ENCODE measurements at regions of chr7 and their contacts with region 1.

Region 1: GRCh38 chr7:47968847-47969774 is 10.3 kb downstream of the HUS1 start:
- DNase-seq: peak; percentile 48
- ATAC-seq: peak; percentile 77
- H3K4me3 Mint-ChIP-seq: no peak overlapping the region
- H3K27ac Mint-ChIP-seq: no peak overlapping the region
- H3K4me1 Mint-ChIP-seq: peaks cover 23% of the 10 kb centered on the region
- H3K27me3 Mint-ChIP-seq: no peaks in the 10 kb centered on the region
- CTCF ChIP-seq: peak; percentile 86

Region 2: GRCh38 chr7:47266131-47266706 is 702.9 kb before region 1 on chr7:
- CTCF ChIA-PET with region 1: interaction called, 28 read pairs
- POLR2A ChIA-PET with region 1: no interaction called
- intact Hi-C with region 1: loop called (anchors 1 kb)
- DNase-seq: peak; percentile 50
- ATAC-seq: peak; percentile 92
- H3K4me3 Mint-ChIP-seq: no peak overlapping the region
- H3K27ac Mint-ChIP-seq: no peak overlapping the region
- H3K4me1 Mint-ChIP-seq: no peaks in the 10 kb centered on the region
- H3K27me3 Mint-ChIP-seq: no peaks in the 10 kb centered on the region
- CTCF ChIP-seq: peak; percentile 60

Region 3: DNA sequence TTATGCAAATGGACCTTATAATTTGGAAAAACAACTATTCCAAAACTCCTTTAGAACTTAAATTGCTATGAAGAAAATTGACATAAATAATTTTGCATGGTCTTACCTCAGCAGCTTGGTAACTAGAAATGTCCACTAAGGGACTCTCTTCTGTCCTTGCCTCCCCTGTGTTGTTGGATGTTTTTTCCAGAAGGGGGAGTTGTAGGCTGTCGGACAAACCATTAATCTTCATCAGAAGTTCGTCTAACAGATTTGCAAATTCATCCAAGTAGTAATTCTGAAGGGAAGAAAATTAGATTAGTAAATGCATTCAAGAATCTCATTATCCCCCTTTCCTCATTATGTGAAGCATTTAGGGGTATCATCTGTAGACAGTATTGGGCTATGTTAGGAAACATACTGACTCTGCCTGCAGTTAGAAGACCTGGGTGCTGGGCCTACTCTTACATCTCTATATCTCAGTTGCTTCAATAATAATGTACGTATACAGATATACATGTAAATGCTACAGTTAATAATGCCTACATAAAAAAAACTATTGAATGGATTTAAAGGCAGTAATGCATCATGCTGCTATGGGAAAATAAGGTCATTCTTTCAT is 176.5 kb before region 1 on chr7:
- CTCF ChIA-PET with region 1: no interaction called
- POLR2A ChIA-PET with region 1: no interaction called
- intact Hi-C with region 1: loop called (anchors 1 kb)
- DNase-seq: no peak
- ATAC-seq: no peak
- H3K4me3 Mint-ChIP-seq: no peak overlapping the region
- H3K27ac Mint-ChIP-seq: no peak overlapping the region
- H3K4me1 Mint-ChIP-seq: no peaks in the 10 kb centered on the region
- H3K27me3 Mint-ChIP-seq: no peaks in the 10 kb centered on the region
- CTCF ChIP-seq: no peak

Region 4: DNA sequence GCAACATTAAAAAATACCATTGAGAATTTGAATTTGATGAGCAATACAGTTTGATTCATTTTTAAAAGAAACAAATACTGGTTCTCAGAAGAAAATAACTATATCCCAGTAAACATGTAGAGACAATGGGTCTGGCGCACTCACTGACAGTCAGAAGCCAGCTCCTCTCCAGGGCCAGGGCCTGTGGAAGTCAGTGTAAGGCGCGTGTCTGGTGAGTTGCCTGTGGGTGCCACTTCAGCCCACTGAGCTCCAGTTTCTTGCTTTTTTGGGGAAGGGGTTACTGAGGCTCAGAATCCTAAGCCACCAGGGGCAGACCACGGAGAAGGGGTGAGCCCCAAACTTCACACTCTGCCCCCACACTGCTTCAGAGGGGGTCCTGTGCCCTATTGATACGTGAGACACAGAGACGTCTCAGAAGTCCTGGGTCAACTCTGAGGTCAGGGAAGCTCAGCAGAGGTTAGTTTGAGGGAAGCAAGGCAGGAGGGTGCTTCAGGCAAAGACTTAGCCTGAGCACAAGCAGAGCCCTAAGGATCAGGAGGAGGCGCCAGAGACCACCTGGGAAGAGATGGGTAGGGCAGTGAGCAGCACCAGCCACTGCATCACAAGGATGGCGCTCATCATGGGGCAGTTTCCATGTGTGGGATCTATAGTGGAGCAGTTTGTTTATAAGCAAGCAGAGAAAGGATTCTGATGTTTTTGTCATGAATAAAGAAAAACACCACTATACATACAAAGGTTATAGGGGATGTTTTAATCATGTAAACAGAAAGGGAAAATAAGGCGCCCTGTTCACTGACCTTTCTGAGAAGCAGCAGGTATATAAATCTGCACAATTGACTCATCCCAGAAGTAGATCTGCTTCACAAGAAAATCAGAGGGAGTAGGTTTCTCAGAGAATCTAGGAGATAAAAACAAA is 116.5 kb before region 1 on chr7:
- CTCF ChIA-PET with region 1: interaction called, 5 read pairs
- POLR2A ChIA-PET with region 1: no interaction called
- intact Hi-C with region 1: loop called (anchors 1 kb)
- DNase-seq: no peak
- ATAC-seq: peak; percentile 40
- H3K4me3 Mint-ChIP-seq: no peak overlapping the region
- H3K27ac Mint-ChIP-seq: no peak overlapping the region
- H3K4me1 Mint-ChIP-seq: no peaks in the 10 kb centered on the region
- H3K27me3 Mint-ChIP-seq: no peaks in the 10 kb centered on the region
- CTCF ChIP-seq: no peak

Region 5: DNA sequence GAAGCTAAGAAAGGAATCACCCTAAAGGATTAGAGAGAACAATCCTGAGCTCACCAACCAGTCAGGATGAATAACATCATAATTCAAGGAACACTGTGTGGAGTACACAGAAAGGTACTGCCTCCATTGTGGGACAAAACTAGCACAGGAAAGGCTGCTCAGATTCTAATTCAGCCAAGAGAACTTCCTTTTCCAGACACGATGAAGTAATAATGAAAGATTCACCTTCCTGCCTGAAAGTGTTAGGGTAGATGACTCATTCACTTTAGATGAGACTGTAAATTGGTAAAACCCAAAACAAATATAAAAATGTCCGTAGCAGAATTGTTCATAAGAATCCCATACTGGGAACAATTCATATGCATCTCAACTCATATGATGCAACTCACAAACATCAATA is 1122.4 kb after region 1 on chr7:
- CTCF ChIA-PET with region 1: no interaction called
- POLR2A ChIA-PET with region 1: no interaction called
- intact Hi-C with region 1: no loop called
- DNase-seq: no peak
- ATAC-seq: no peak
- H3K4me3 Mint-ChIP-seq: no peak overlapping the region
- H3K27ac Mint-ChIP-seq: no peak overlapping the region
- H3K4me1 Mint-ChIP-seq: no peaks in the 10 kb centered on the region
- H3K27me3 Mint-ChIP-seq: no peaks in the 10 kb centered on the region
- CTCF ChIP-seq: no peak

Measured in activated B cell treated with CpG ODN at 0.5 μM for 24 hours (primary cell).